ENCODE measurements at regions of chr7 and their contacts with region 1.

Region 1: DNA sequence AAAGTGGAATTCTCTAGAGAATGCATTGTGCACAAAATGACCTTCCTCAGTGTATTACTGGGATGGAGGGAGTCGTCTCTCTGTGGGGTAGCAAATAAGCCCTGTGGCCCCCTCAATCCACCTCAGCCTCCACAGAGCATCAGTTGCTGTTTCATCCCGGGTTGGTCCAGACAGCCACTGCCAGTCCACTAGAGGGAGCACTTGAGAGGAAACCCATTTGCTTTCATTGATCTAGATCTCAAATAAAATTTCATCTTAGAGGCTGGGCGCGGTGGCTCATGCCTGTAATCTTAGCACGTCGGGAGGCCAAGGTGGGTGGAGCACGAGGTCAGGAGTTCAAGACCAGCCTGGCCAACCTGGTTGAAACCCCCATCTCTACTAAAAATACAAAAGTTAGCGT is 1128.7 kb downstream of the CNTNAP2 start:
- DNase-seq: peak; percentile 24
- ATAC-seq: peak; percentile 66
- H3K4me3 ChIP-seq: no peak overlapping the region
- H3K27ac ChIP-seq: no peak overlapping the region
- H3K4me1 ChIP-seq: no peaks in the 10 kb centered on the region
- H3K27me3 ChIP-seq: no peaks in the 10 kb centered on the region
- CTCF ChIP-seq: peak; percentile 49
- POLR2A ChIP-seq: no peak
- RAD21 ChIP-seq: peak; percentile 50

Region 2: DNA sequence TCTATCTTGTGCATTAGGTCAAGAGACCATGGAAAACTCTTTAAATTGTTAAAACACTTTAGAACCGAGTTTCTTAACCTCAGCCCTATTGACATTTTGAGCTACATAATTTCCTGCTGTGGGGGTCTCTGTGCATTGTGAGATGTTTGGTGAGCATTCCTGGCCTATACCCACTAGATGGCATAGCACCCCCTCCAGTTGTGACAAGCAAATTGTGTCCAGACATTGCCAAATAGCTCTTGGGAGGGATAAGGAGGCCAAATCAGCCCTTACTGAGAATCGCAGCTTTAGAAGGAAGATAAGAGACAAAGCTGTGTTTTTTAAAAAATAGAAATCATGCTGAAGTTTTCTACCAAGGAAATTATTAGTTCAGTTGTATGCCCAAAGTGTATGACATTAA is 186.8 kb after region 1 on chr7:
- CTCF ChIA-PET with region 1: no interaction called
- POLR2A ChIA-PET with region 1: no interaction called
- dilution Hi-C with region 1: no loop called
- in situ Hi-C with region 1: no loop called
- intact Hi-C with region 1: loop called (anchors 10 kb)
- DNase-seq: peak; percentile 48
- ATAC-seq: peak; percentile 80
- H3K4me3 ChIP-seq: no peak overlapping the region
- H3K27ac ChIP-seq: no peak overlapping the region
- H3K4me1 ChIP-seq: no peaks in the 10 kb centered on the region
- H3K27me3 ChIP-seq: no peaks in the 10 kb centered on the region
- CTCF ChIP-seq: peak; percentile 45
- POLR2A ChIP-seq: no peak
- RAD21 ChIP-seq: peak; percentile 73

Region 3: DNA sequence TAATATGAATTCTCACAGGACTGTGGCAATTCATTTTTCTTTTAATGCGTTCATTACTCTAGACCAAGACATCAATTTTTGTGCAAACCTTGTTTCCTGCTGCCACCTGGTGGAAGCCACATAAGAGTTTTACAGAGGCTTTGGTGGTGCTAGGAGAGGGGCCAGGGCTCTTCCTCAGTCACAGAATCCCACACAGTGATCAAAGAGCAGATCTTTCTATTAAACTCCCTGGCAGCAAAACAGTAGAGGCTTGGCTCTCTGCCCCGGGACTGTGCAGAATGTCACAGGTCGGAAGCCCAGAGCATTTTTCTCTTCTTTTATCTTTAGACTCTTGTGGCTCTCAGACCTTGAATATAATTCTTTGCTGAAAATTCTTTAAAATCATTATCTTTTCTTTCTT is 838.8 kb after region 1 on chr7:
- CTCF ChIA-PET with region 1: no interaction called
- POLR2A ChIA-PET with region 1: no interaction called
- dilution Hi-C with region 1: no loop called
- in situ Hi-C with region 1: no loop called
- intact Hi-C with region 1: loop called (anchors 1 kb)
- DNase-seq: peak; percentile 19
- ATAC-seq: peak; percentile 63
- H3K4me3 ChIP-seq: no peak overlapping the region
- H3K27ac ChIP-seq: no peak overlapping the region
- H3K4me1 ChIP-seq: no peaks in the 10 kb centered on the region
- H3K27me3 ChIP-seq: no peaks in the 10 kb centered on the region
- CTCF ChIP-seq: peak; percentile 29; the same call in 1 of the 2 replicates
- POLR2A ChIP-seq: no peak
- RAD21 ChIP-seq: peak; percentile 52

Region 4: GRCh38 chr7:148142660-148143248 is 897.5 kb after region 1 on chr7:
- CTCF ChIA-PET with region 1: no interaction called
- POLR2A ChIA-PET with region 1: no interaction called
- dilution Hi-C with region 1: no loop called
- in situ Hi-C with region 1: no loop called
- intact Hi-C with region 1: loop called (anchors 10 kb)
- DNase-seq: peak; percentile 21
- ATAC-seq: no peak
- H3K4me3 ChIP-seq: no peak overlapping the region
- H3K27ac ChIP-seq: no peak overlapping the region
- H3K4me1 ChIP-seq: no peaks in the 10 kb centered on the region
- H3K27me3 ChIP-seq: no peaks in the 10 kb centered on the region
- CTCF ChIP-seq: peak; percentile 36; the same call in 1 of the 2 replicates
- POLR2A ChIP-seq: no peak
- RAD21 ChIP-seq: peak; percentile 40; the same call in 1 of the 2 replicates

Region 5: GRCh38 chr7:148242294-148242801 is 997.1 kb after region 1 on chr7:
- CTCF ChIA-PET with region 1: no interaction called
- POLR2A ChIA-PET with region 1: no interaction called
- dilution Hi-C with region 1: no loop called
- in situ Hi-C with region 1: no loop called
- intact Hi-C with region 1: loop called (anchors 5 kb)
- DNase-seq: peak; percentile 16
- ATAC-seq: peak; percentile 53
- H3K4me3 ChIP-seq: no peak overlapping the region
- H3K27ac ChIP-seq: no peak overlapping the region
- H3K4me1 ChIP-seq: no peaks in the 10 kb centered on the region
- H3K27me3 ChIP-seq: no peaks in the 10 kb centered on the region
- CTCF ChIP-seq: peak; percentile 51
- POLR2A ChIP-seq: no peak
- RAD21 ChIP-seq: peak; percentile 51

Region 6: DNA sequence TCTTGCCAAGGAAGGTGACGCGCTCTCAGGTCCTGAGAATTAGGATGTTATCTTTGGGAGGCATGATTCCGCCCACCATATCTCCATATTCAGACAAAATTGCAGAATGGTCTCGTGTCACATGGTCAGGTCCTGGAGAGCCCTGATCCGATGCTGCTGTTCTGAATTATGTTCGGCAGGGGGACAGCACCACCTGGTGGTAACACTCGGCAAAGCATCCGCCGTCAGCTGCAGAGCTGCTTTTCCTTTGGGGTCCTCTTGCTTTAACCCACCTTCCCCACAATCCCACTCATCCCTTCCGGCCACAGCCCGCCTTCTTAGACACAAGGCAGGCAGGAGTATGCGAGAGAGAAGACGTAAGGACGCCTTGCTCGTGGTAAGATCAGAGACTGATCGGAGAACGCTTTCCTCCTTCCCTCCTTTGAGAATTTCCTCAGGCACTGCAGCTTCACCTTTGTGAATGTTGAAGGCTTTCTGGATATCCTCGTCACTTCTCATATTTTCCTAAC is 1017.5 kb after region 1 on chr7:
- CTCF ChIA-PET with region 1: no interaction called
- POLR2A ChIA-PET with region 1: no interaction called
- dilution Hi-C with region 1: no loop called
- in situ Hi-C with region 1: no loop called
- intact Hi-C with region 1: loop called (anchors 5 kb)
- DNase-seq: peak; percentile 4
- ATAC-seq: peak; percentile 78
- H3K4me3 ChIP-seq: no peak overlapping the region
- H3K27ac ChIP-seq: no peak overlapping the region
- H3K4me1 ChIP-seq: no peaks in the 10 kb centered on the region
- H3K27me3 ChIP-seq: no peaks in the 10 kb centered on the region
- CTCF ChIP-seq: peak; percentile 58
- POLR2A ChIP-seq: no peak
- RAD21 ChIP-seq: peak; percentile 71

Measured in IMR-90 (cell line).